ENCODE measurements at regions of chr5 and their contacts with region 1.

Region 1: GRCh38 chr5:172188033-172188892 is at the start of gene STK10:
- DNase-seq: peak; percentile 91 to 96 (median 95)
- H3K4me3 ChIP-seq: peak within 1 kb of the TSS; percentile 86 to 97 (median 95)
- H3K27ac ChIP-seq: peak within 1 kb of the TSS; percentile 61 to 85
- H3K4me1 ChIP-seq: peaks cover 7 to 46% (median 37%) of the 10 kb centered on the region in 4 experiments
- H3K27me3 ChIP-seq: no peaks in the 10 kb centered on the region

Region 2: DNA sequence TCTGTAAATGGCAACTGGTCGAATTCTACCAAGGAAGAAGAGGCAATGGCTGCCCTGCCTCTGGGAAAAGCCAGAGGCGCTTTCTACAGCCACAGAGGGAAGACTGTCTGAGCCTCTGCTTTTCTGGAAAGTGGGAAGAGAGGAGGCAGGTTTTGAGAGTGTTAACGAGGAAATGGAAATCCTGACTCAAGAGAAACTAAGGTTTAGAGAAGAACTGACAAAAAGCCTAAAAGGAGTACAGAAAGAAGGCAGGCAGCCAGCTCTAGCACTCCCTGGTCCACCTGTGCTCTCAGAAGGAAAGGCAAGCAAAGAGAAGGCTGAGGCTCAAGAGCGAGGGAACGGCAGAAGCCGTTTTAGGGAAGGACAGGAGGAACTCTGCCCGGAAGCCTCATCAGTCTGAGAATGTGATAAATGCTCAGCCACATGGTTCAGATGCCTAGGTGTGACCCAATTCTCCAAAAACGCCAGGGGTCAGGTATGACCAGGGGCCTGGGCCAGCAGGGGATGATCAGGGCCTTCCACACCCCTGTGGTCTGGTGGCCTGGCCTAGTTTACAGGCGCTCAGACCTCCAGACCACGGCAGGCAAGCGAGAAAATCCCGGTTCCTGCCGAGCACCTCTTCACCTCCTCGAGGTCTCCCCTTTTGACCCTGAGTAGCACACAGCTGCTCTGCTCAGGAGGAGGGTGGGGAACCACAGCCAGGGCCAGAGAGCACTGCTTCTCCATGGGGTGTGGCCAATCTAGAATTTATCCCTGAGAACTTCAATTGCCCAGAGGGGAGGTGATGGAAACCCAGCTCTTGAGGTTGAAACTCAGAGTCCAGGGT is 101.9 kb before region 1 on chr5:
- CTCF ChIA-PET with region 1: no interaction called
- POLR2A ChIA-PET with region 1: no interaction called
- DNase-seq: no peak
- H3K4me3 ChIP-seq: no peak overlapping the region
- H3K27ac ChIP-seq: no peak overlapping the region
- H3K4me1 ChIP-seq: no peaks in the 10 kb centered on the region
- H3K27me3 ChIP-seq: no peaks in the 10 kb centered on the region

Region 3: DNA sequence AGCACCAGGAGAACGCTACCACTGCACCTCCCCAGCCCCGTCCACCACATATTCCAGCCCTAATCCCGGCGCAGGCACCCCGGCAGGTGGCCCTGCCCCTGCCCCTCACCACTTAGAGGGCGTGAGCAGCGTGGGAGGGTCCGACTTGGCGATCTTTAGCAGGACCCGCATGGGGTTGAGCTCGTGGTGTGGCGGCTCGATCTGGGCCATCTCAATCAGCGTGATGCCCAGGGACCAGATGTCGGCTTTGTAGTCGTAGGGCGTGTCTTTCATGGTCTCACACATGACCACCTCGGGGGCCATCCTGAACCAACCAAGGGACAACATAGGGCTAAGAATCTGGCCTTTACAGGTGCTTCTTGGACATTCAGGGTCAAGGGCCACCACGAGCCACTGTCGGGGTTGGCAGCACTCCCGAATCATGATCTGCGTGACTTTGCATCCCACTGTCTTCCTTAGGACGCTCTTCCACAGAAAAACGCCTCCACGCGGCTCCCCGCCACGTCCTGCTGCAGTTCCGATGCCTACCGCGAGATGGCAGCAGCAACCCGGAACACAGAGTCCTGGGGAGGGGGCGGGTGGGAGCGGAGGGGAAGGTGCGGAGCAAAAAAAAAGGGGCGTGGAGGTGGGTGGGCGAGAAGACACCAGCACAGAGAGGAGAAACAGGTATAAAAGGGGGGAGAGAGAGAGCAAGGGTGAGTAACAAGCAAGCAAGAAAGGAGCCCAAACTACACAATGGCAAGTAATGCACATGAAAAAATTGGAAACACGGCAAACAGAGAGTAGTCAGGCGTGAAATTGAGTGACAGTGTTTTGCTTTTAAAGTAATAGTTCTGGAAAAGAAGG is 81.5 kb before region 1 on chr5:
- CTCF ChIA-PET with region 1: interaction called, 87 read pairs
- POLR2A ChIA-PET with region 1: interaction called, 16 read pairs
- DNase-seq: peak; percentile 56 to 62 (median 58)
- H3K4me3 ChIP-seq: peak overlapping the region in 3 of 7 experiments; percentile 30 to 33 (median 32)
- H3K27ac ChIP-seq: no peak overlapping the region
- H3K4me1 ChIP-seq: peaks cover 13 to 52% (median 45%) of the 10 kb centered on the region in 4 experiments
- H3K27me3 ChIP-seq: no peaks in the 10 kb centered on the region

Region 4: DNA sequence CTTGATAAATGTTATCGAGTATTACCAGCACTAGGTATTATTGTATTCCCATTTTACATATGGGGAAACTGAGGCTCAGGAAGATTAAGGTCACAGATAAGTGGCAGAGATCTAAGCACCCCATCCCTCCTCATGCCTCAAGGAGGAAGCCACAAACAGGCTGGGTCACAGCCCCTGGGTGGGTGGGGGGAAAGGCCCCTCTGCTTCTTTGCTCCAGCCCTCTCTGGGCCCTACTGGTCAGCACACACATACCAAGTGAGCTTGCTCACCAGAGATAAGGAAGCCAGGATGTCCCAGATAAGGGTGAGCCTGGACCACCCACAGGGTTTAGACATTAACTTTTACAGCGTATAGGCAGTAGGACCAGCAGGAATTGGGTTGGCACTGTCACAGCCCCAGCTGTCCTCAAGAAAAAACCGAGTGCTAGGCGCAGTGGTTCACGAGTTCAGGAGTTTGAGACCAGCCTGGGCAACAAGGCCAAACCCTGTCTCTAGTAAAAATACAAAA is 45.5 kb before region 1 on chr5:
- CTCF ChIA-PET with region 1: interaction called, 11 read pairs
- POLR2A ChIA-PET with region 1: no interaction called
- DNase-seq: peak in 2 of 3 donors; percentile 35 to 54
- H3K4me3 ChIP-seq: no peak overlapping the region
- H3K27ac ChIP-seq: peak overlapping the region; percentile 12 to 39
- H3K4me1 ChIP-seq: peaks cover 0 to 36% (median 13%) of the 10 kb centered on the region in 4 experiments
- H3K27me3 ChIP-seq: no peaks in the 10 kb centered on the region

Region 5: GRCh38 chr5:172162323-172162986 is 25.8 kb before region 1 on chr5:
- CTCF ChIA-PET with region 1: interaction called, 22 read pairs
- POLR2A ChIA-PET with region 1: interaction called, 4 read pairs
- DNase-seq: no peak
- H3K4me3 ChIP-seq: no peak overlapping the region
- H3K27ac ChIP-seq: no peak overlapping the region
- H3K4me1 ChIP-seq: peaks cover 0 to 13% (median 6%) of the 10 kb centered on the region in 4 experiments
- H3K27me3 ChIP-seq: no peaks in the 10 kb centered on the region

Region 6: DNA sequence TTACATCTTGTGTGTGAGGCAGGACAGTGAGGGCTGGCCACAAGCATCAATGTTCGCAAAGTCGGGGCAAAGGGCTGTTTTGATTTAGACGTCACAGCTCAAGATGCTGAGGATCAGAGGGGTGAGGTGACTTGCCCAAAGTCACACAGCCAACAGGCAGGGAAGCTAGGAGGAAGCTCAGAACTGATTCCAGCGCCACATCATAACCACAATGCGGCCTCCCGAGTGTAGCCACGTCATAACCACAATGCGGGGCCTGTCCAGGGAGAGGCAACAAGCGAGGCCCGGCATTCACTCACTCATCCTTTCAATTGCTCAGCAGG is 14.5 kb before region 1 on chr5:
- CTCF ChIA-PET with region 1: interaction called, 54 read pairs
- POLR2A ChIA-PET with region 1: interaction called, 49 read pairs
- DNase-seq: peak; percentile 67 to 76 (median 75)
- H3K4me3 ChIP-seq: peak overlapping the region in 2 of 7 experiments; percentile 31 to 71
- H3K27ac ChIP-seq: peak overlapping the region in 1 of 2 experiments; percentile 68
- H3K4me1 ChIP-seq: peaks cover 19 to 89% (median 86%) of the 10 kb centered on the region in 4 experiments
- H3K27me3 ChIP-seq: no peaks in the 10 kb centered on the region

Region 7: DNA sequence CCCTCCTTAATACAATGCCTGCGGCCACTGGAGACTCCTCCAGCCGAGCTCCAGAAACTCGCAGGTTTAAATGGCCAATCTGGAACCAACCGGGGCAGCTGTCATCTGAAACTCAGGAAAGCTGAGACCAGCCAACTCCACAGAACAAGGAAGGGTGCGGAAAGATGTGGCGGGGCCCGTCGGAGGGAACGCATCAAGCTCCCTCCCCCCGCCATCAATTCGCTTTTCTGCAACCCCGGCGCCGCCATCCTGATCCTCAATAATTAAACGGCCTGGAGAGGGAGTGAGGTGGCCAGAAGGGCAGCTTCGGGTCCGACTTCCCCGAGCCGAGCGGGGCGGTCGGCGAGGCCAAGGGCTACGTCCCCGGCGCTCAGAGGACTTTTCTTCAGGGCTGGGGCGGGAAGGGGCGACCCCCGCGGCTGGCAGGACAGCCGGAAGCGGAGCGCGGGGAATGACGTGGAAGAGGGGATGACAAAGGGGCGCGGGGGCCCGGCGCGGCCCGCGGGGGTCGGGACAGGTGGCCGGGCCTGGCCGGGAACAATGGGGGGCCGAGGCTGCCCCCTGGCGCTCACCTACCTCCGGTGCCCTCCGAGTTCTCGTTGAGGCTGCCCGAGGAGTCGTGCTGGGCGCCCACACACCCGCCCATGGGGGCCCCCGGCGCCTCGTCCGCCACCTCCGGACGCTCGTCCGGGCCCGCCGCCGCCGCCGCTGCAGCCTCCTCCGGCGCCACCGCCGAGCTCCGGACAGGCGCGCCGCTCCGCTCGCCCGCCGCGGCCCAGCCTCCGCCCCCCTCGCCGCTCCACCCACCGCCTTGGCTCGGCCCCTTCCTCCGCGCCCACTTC is 95.0 kb after region 1 on chr5 and contains the start of gene UBTD2:
- CTCF ChIA-PET with region 1: interaction called, 10 read pairs
- POLR2A ChIA-PET with region 1: no interaction called
- DNase-seq: peak; percentile 63 to 86 (median 78)
- H3K4me3 ChIP-seq: peak within 1 kb of the TSS; percentile 74 to 95 (median 85)
- H3K27ac ChIP-seq: peak within 1 kb of the TSS; percentile 25 to 68
- H3K4me1 ChIP-seq: peaks cover 10 to 27% (median 19%) of the 10 kb centered on the region in 4 experiments
- H3K27me3 ChIP-seq: peaks cover 0 to 4% (median 0%) of the 10 kb centered on the region in 5 experiments

Region 8: DNA sequence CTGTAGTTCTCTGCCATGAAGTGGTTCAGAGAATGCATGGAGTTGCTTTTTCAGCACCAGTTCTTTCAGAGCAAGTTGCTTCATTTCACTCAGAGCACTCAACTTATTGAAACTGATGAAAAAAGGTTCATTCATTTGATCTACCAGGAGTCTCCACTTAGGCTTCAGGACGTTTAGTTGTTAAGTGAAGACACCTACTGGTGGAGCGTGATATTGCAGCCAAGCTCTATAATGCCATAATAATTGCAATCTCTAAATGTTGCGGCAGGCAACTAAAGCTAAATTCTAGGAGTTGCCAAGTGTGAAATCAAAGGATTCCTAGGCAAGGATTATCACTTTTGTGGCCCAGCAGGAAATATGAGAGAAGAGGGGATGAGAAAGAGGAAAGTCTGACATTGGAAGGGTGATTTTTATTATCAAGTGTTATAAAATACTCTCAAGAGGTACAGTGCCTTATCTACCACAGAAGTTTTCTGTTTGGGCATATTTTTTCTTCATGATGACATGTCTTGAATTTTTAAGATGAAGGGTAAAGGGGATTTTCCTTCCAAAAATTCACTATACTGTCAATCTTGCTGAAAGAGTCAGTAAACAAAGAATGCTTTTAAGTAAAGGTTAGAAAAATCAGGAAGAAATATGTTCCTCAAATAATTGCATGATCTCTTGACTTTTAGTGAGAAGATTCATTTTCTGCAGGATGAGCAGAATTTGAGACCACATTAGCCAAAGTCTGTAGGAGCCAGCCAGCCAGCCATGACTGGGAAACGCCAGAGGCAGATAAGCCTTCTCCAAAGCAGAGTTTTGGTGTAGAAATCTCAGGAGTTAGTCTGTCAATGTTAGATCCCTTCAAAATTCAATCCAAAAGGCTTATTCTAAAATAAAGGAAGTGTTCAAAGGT is 182.6 kb after region 1 on chr5:
- CTCF ChIA-PET with region 1: no interaction called
- POLR2A ChIA-PET with region 1: no interaction called
- DNase-seq: peak; percentile 10 to 44 (median 23)
- H3K4me3 ChIP-seq: no peak overlapping the region
- H3K27ac ChIP-seq: no peak overlapping the region
- H3K4me1 ChIP-seq: no peaks in the 10 kb centered on the region
- H3K27me3 ChIP-seq: no peaks in the 10 kb centered on the region

Measured in common myeloid progenitor, CD34-positive (primary cell).